ENCODE measurements at regions of chr7 and their contacts with region 1.

Region 1: GRCh38 chr7:50467817-50468610 is 17.9 kb upstream of the FIGNL1 start:
- DNase-seq: peak; percentile 78 to 94 (median 87)

Region 2: GRCh38 chr7:50679218-50680007 is 211.4 kb after region 1 on chr7:
- intact Hi-C with region 1: loop called (anchors 5 kb)
- DNase-seq: peak in 1 of 42 donors; percentile 42

Region 3: DNA sequence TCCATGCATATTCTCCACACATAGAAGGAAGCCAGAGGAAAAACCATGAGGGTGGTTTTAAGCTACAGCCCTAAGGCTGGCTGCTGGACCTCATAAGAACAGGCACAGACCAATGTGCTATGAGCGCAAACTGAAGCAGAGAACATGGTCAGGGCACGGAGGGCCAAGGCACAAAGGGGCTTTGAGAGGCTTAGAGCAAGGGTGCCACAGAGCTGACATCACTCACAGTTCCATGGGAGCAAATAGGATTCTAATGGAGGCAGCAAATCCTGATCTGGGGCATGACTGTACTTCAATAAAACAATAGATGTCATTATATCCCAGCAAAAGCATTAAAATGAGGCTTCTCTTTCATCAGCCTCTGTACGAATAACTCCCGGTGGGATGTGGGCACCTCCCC is 686.2 kb after region 1 on chr7:
- intact Hi-C with region 1: loop called (anchors 10 kb)
- DNase-seq: peak; percentile 51 to 92 (median 80)

Region 4: GRCh38 chr7:51366930-51367613 is 899.1 kb after region 1 on chr7:
- intact Hi-C with region 1: loop called (anchors 10 kb)
- DNase-seq: peak in 40 of 42 donors; percentile 15 to 88 (median 64)